ENCODE measurements at regions of chr1 and their contacts with region 1.

Region 1: GRCh38 chr1:1943834-1944570 is 24.9 kb upstream of the TMEM52 start:
- DNase-seq: peak; percentile 85
- ATAC-seq: peak; percentile 94
- H3K4me3 Mint-ChIP-seq: peak overlapping the region; percentile 43
- H3K27ac Mint-ChIP-seq: no peak overlapping the region; the same call in 1 of the 2 replicates
- H3K4me1 Mint-ChIP-seq: peaks cover 4% of the 10 kb centered on the region; the same call in 1 of the 2 replicates
- H3K27me3 Mint-ChIP-seq: no peaks in the 10 kb centered on the region
- CTCF ChIP-seq: peak; percentile 91

Region 2: DNA sequence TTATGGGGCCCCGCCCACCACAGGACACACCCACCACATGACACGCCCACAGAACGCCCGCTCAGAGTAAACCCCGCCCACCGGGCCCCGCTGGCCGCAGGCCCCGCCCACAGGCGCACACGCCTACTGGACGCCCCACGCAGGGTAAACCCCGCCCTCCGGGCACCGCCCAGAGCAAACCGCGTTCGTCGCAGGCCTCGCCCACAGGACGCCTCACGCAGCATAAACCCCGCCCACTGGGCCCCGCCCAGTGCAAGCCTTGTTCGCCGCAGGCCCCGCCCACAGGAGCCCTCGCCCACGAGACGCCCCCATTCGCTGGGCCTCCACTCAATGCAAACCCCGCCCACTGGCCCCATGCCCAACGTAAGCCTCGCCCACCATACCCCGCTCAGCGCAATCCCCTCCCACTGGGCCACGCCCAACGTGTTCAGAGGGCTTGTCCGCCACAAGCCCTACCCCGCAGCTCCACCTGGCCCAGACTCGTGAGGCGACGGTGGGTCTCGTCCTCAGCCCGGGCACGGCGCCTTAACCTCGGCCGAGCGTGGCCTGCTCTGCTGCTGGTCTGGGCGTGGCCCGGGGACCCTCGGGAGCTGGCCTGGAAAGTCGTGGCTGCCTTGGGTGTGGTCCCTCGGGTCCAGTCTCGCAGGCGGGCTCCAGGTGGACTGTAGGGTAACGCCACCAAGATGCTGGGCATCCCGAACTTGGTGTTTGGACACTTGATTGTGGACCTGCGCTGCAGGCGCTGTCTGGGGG is 24.5 kb before region 1 on chr1:
- CTCF ChIA-PET with region 1: interaction called, 12 read pairs
- POLR2A ChIA-PET with region 1: no interaction called
- DNase-seq: peak; percentile 100
- ATAC-seq: peak; percentile 87
- H3K4me3 Mint-ChIP-seq: peak overlapping the region; percentile 30
- H3K27ac Mint-ChIP-seq: no peak overlapping the region
- H3K4me1 Mint-ChIP-seq: peaks cover 7% of the 10 kb centered on the region; the same call in 1 of the 2 replicates
- H3K27me3 Mint-ChIP-seq: no peaks in the 10 kb centered on the region
- CTCF ChIP-seq: no peak

Region 3: GRCh38 chr1:1954831-1955441 is 10.9 kb after region 1 on chr1:
- CTCF ChIA-PET with region 1: interaction called, 43 read pairs
- POLR2A ChIA-PET with region 1: no interaction called
- DNase-seq: peak; percentile 41
- ATAC-seq: peak; percentile 36; the same call in 1 of the 2 replicates
- H3K4me3 Mint-ChIP-seq: no peak overlapping the region
- H3K27ac Mint-ChIP-seq: peak overlapping the region; percentile 92; the same call in 1 of the 2 replicates
- H3K4me1 Mint-ChIP-seq: peaks cover 4% of the 10 kb centered on the region; the same call in 1 of the 2 replicates
- H3K27me3 Mint-ChIP-seq: no peaks in the 10 kb centered on the region; the same call in 1 of the 2 replicates
- CTCF ChIP-seq: peak; percentile 28; the same call in 1 of the 2 replicates

Region 4: GRCh38 chr1:1959840-1960479 is 16.0 kb after region 1 on chr1:
- CTCF ChIA-PET with region 1: interaction called, 43 read pairs
- POLR2A ChIA-PET with region 1: no interaction called
- DNase-seq: peak; percentile 96
- ATAC-seq: peak; percentile 89
- H3K4me3 Mint-ChIP-seq: peak overlapping the region; percentile 49
- H3K27ac Mint-ChIP-seq: no peak overlapping the region; the same call in 1 of the 2 replicates
- H3K4me1 Mint-ChIP-seq: peaks cover 20% of the 10 kb centered on the region
- H3K27me3 Mint-ChIP-seq: no peaks in the 10 kb centered on the region; the same call in none of the 2 replicates
- CTCF ChIP-seq: peak; percentile 90

Region 5: DNA sequence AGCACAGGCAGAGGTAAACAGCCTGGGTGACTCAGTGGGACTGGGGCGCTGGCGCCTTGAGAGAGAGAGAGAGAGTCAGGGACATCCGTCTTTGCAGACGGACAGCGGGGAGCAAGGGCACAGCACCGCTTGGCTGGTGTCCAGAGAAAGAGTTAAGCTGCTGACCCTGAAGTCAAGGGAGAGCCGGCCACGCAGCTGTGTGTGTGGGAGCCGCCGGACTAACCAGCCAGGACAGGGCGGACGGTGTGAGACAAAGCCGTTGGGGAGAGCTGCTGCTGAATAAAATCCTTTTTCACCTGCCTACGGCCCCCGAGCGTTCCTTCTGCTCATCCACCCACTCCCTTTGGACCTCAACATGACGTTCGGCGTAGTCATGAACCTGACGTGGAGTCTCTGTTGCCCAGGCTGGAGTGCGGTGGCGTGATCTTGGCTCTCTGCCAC is 45.1 kb after region 1 on chr1:
- CTCF ChIA-PET with region 1: interaction called, 10 read pairs
- POLR2A ChIA-PET with region 1: no interaction called
- DNase-seq: no peak
- ATAC-seq: no peak
- H3K4me3 Mint-ChIP-seq: no peak overlapping the region
- H3K27ac Mint-ChIP-seq: peak overlapping the region; percentile 11; the same call in 1 of the 2 replicates
- H3K4me1 Mint-ChIP-seq: no peaks in the 10 kb centered on the region
- H3K27me3 Mint-ChIP-seq: no peaks in the 10 kb centered on the region; the same call in 1 of the 2 replicates
- CTCF ChIP-seq: no peak

Region 6: GRCh38 chr1:2049718-2050427 is 105.9 kb after region 1 on chr1 and contains the start of gene PRKCZ:
- CTCF ChIA-PET with region 1: interaction called, 80 read pairs
- POLR2A ChIA-PET with region 1: interaction called, 5 read pairs
- DNase-seq: peak; percentile 98
- ATAC-seq: peak; percentile 66
- H3K4me3 Mint-ChIP-seq: peak within 1 kb of the TSS; percentile 85
- H3K27ac Mint-ChIP-seq: peak within 1 kb of the TSS; percentile 99
- H3K4me1 Mint-ChIP-seq: peaks cover 26% of the 10 kb centered on the region
- H3K27me3 Mint-ChIP-seq: peaks cover 9% of the 10 kb centered on the region; the same call in 1 of the 2 replicates
- CTCF ChIP-seq: no peak
- total RNA-seq, gene PRKCZ: 51.9 to 52.9 TPM (median 52.5 TPM) in 3 replicates

Measured in WTC11 (cell line).